Gastrocnemius medialis (tissue), 4 donors: ENCODE measurements at regions of chr13 and their contacts with region 1.

Region 1: GRCh38 chr13:21060987-21061763 is at the start of gene LATS2:
- DNase-seq: peak; percentile 93 to 96
- ATAC-seq: peak; percentile 87 to 88
- H3K4me3 ChIP-seq: peak within 1 kb of the TSS; percentile 69 to 95 (median 92)
- H3K27ac ChIP-seq: peak within 1 kb of the TSS; percentile 87 to 100 (median 100)
- H3K4me1 ChIP-seq: peaks cover 43 to 45% of the 10 kb centered on the region in 2 donors
- H3K27me3 ChIP-seq: no peaks in the 10 kb centered on the region
- CTCF ChIP-seq: peak in 3 of 5 experiments; percentile 59 to 69 (median 59)
- POLR2A ChIP-seq: peak; percentile 79 to 91
- total RNA-seq, gene LATS2: 11.5 to 34.1 (median 18.8) TPM

Region 2: GRCh38 chr13:20684546-20684945 is 376.6 kb before region 1 on chr13:
- in situ Hi-C with region 1: no loop called
- intact Hi-C with region 1: no loop called
- DNase-seq: no peak
- ATAC-seq: no peak
- H3K4me3 ChIP-seq: no peak overlapping the region
- H3K27ac ChIP-seq: no peak overlapping the region
- H3K4me1 ChIP-seq: no peaks in the 10 kb centered on the region
- H3K27me3 ChIP-seq: no peaks in the 10 kb centered on the region
- CTCF ChIP-seq: no peak
- POLR2A ChIP-seq: no peak

Region 3: DNA sequence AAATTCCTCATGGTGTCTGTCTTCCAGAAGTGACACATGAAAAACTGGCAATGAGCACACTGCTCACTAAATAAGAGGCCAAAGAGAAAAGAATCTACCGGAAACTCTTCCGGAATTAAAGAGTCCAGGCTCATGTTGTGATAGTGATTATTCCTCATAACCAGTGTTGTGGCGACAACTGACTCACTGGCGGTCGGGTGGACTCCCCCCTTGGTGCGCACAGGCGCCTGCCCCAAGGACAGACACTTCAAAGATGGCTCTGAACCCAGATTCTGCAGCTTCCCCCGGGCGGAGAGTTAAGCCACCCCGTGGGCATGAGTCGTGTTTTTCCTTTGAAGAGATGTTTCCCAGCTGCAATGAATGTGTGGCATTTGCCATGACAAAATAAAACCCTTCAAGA is 347.4 kb before region 1 on chr13:
- in situ Hi-C with region 1: no loop called
- intact Hi-C with region 1: loop called (anchors 5 kb)
- DNase-seq: peak in 1 of 2 donors; percentile 42
- ATAC-seq: no peak
- H3K4me3 ChIP-seq: peak overlapping the region in 3 of 4 donors; percentile 38 to 56 (median 47)
- H3K27ac ChIP-seq: peak overlapping the region; percentile 80 to 89 (median 88)
- H3K4me1 ChIP-seq: peaks cover 46 to 56% of the 10 kb centered on the region in 2 donors
- H3K27me3 ChIP-seq: no peaks in the 10 kb centered on the region
- CTCF ChIP-seq: no peak
- POLR2A ChIP-seq: peak in 1 of 2 donors; percentile 13

Region 4: DNA sequence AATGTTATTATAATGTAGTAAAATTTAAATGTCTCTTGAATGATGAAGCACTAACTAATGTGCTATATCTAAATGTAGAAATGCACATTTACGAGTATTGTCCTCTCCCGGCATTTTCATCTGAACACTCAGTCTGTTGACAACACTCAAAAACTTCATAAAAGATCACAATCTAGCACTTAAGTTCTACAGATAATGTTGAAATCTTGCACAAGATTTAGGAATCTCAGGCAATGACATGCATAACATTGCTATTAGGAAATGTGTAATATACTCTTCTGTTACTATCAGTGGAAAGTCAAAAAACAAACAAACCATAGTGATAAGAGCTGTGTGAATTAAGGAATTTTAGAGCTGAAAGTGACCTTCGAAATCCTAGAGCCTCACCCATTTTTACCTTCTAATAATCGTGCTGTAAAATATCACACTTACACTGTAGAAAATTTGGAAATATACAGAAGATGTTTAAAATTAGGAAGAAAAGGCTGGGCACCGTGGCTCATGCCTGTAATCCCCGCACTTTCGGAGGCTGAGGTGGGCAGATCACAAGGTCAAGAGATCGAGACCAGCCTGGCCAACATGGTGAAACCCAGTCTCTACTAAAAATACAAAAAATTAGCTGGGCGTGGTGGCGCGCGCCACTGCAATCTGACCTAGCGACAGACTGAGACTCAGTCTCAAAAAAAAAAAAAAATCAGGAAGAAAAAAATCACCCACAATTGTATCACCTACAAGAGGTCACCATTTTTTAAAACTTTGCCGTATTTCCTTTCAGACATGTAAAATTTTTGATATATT is 120.9 kb before region 1 on chr13:
- in situ Hi-C with region 1: loop called in 2 of 4 experiments (anchors 5 to 10 kb)
- intact Hi-C with region 1: loop called (anchors 1 kb)
- DNase-seq: no peak
- ATAC-seq: no peak
- H3K4me3 ChIP-seq: no peak overlapping the region
- H3K27ac ChIP-seq: peak overlapping the region; percentile 73 to 91 (median 80)
- H3K4me1 ChIP-seq: peaks cover 20 to 24% of the 10 kb centered on the region in 2 donors
- H3K27me3 ChIP-seq: no peaks in the 10 kb centered on the region
- CTCF ChIP-seq: no peak
- POLR2A ChIP-seq: no peak

Region 5: GRCh38 chr13:20997430-20998161 is 63.6 kb before region 1 on chr13:
- in situ Hi-C with region 1: no loop called
- intact Hi-C with region 1: loop called (anchors 1 kb)
- DNase-seq: peak in 1 of 2 donors; percentile 48
- ATAC-seq: no peak
- H3K4me3 ChIP-seq: no peak overlapping the region
- H3K27ac ChIP-seq: peak overlapping the region; percentile 77 to 90 (median 87)
- H3K4me1 ChIP-seq: peaks cover 41 to 50% of the 10 kb centered on the region in 2 donors
- H3K27me3 ChIP-seq: no peaks in the 10 kb centered on the region
- CTCF ChIP-seq: no peak
- POLR2A ChIP-seq: no peak

Region 6: GRCh38 chr13:21034603-21035191 is 26.5 kb before region 1 on chr13:
- in situ Hi-C with region 1: no loop called
- intact Hi-C with region 1: loop called (anchors 1 kb)
- DNase-seq: peak in 1 of 2 donors; percentile 66
- ATAC-seq: peak; percentile 55 to 63
- H3K4me3 ChIP-seq: no peak overlapping the region
- H3K27ac ChIP-seq: peak overlapping the region; percentile 83 to 89 (median 86)
- H3K4me1 ChIP-seq: peaks cover 60 to 72% of the 10 kb centered on the region in 2 donors
- H3K27me3 ChIP-seq: no peaks in the 10 kb centered on the region
- CTCF ChIP-seq: peak in 3 of 5 experiments; percentile 33 to 53 (median 40)
- POLR2A ChIP-seq: no peak